Posterior vena cava (tissue), 2 donors: ENCODE measurements at regions of chr2 and their contacts with region 1.

Region 1: DNA sequence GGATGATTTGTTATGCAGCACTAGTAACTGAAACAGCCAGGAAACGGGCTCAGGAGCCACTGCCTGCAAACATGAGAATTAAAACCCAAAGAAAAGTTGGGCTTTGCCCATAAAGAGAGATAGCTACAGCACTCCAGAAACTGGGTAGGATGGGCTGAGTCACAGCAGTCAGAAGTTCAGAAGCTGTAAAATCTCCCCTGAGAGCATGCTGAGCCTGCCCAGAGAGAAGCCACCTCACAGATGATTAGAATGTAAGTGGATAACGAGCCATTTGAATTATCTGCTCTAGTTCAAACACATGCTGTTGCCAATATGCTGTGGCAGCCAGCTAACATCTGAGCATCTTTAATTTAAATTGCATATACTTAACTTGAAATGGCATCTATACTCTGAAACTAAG is 388.1 kb upstream of the ACVR2A start:
- DNase-seq: no peak

Region 2: GRCh38 chr2:146251328-146251727 is 1205.5 kb before region 1 on chr2:
- intact Hi-C with region 1: no loop called
- DNase-seq: no peak

Region 3: GRCh38 chr2:146597291-146597690 is 859.5 kb before region 1 on chr2:
- intact Hi-C with region 1: loop called in 1 of 2 experiments (anchors 5 kb)
- DNase-seq: no peak